Heart right ventricle (tissue), 16 donors: ENCODE measurements at regions of chr7 and their contacts with region 1.

Region 1: DNA sequence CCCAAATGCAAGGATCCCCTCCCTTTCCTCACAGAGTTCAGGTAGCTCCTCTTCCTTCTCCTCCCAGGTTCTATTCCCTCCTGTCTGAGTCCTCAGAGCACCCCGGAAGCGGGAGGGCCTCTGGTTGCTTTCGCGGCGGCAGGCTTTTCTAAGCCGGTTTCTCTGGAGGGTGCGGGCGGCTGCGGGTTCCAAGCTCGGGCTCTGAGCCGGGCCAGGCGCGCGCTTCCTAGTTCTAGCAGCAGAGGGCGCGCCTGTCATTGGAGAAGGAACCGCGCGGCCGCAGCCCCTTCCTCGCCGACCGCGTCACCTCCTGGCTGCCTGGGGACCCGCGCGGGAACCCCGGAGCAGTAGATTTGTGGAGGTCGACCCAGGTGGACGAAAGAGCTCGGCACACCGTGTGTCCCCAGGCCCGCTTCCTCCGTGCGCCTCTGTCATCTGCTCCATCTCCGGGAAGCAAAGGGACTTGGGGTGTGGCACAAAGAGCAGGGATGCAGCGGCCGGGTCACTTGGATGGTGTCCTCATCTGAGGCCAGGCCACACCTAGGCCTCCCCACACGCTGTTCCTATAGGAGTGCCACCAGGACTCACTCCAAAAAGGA is 389.0 kb upstream of the PODXL start:
- DNase-seq: peak; percentile 9 to 47
- ATAC-seq: peak; percentile 41 to 82 (median 65)
- H3K4me3 ChIP-seq: peak overlapping the region in 6 of 10 donors; percentile 25 to 40 (median 30)
- H3K27ac ChIP-seq: no peak overlapping the region
- H3K4me1 ChIP-seq: peaks cover 0 to 18% (median 8%) of the 10 kb centered on the region in 9 donors
- H3K27me3 ChIP-seq: peaks cover 0 to 65% (median 41%) of the 10 kb centered on the region in 7 donors
- CTCF ChIP-seq: peak; percentile 65 to 91 (median 89)

Region 2: DNA sequence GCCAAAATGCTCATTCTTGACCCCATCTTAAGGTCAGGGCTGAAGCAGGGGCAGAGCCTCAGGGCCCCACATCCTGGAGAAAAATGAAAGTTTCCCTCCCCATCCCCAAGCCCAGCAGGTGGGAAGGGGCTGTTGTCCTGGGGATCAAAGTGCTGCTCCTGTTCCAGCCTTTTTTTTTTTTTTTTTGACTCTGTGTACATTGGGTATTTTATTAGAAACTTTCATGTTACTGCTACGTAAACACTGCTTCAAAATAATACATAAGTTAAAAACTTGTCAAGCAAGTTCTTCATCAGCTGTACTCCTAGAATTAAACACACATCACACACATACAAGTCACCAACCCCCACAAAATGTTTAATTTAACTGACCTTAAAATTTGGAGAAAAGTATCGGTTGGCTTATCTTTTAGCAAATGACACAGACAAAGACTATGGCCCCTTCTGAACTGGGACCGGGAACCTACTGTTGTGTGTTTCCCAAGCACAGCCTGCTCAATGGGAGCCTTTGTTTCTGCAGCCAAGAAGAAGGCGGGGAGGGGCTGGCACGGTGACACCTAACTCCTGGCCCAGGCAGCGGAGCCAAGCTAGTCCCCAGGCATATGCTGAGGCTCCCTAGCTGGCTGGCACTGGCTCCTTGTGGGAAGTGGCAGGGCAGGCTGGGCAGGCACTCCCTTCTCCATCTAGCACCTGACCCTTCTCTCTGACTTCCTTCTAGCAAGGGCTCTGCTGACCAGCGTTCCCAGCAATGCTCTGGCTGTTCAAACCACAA is 305.7 kb after region 1 on chr7:
- intact Hi-C with region 1: loop called in 8 of 10 experiments (anchors 5 to 10 kb)
- DNase-seq: peak; percentile 63 to 79
- ATAC-seq: peak; percentile 40 to 88 (median 83)
- H3K4me3 ChIP-seq: no peak overlapping the region
- H3K27ac ChIP-seq: no peak overlapping the region
- H3K4me1 ChIP-seq: peaks cover 1 to 54% (median 33%) of the 10 kb centered on the region in 9 donors
- H3K27me3 ChIP-seq: no peaks in the 10 kb centered on the region
- CTCF ChIP-seq: no peak

Region 3: GRCh38 chr7:133183063-133183778 is 1237.8 kb after region 1 on chr7:
- intact Hi-C with region 1: no loop called
- DNase-seq: no peak
- ATAC-seq: peak in 1 of 8 donors; percentile 35
- H3K4me3 ChIP-seq: no peak overlapping the region
- H3K27ac ChIP-seq: no peak overlapping the region
- H3K4me1 ChIP-seq: no peaks in the 10 kb centered on the region
- H3K27me3 ChIP-seq: no peaks in the 10 kb centered on the region
- CTCF ChIP-seq: no peak